HCT116 (cell line): ENCODE measurements at regions of chr5 and their contacts with region 1.

Region 1: GRCh38 chr5:50823568-50823967 is 157.1 kb downstream of the PARP8 start:
- DNase-seq: no peak
- ATAC-seq: no peak
- H3K4me3 ChIP-seq: no peak overlapping the region
- H3K27ac ChIP-seq: no peak overlapping the region
- H3K4me1 ChIP-seq: no peaks in the 10 kb centered on the region
- H3K27me3 ChIP-seq: no peaks in the 10 kb centered on the region
- CTCF ChIP-seq: no peak
- POLR2A ChIP-seq: no peak
- RAD21 ChIP-seq: no peak

Region 2: GRCh38 chr5:50836356-50836755 is 12.8 kb after region 1 on chr5:
- CTCF ChIA-PET with region 1: no interaction called
- POLR2A ChIA-PET with region 1: no interaction called
- RAD21 ChIA-PET with region 1: no interaction called
- intact Hi-C with region 1: no loop called
- DNase-seq: no peak
- ATAC-seq: no peak
- H3K4me3 ChIP-seq: no peak overlapping the region
- H3K27ac ChIP-seq: no peak overlapping the region
- H3K4me1 ChIP-seq: no peaks in the 10 kb centered on the region
- H3K27me3 ChIP-seq: no peaks in the 10 kb centered on the region
- CTCF ChIP-seq: no peak
- POLR2A ChIP-seq: no peak
- RAD21 ChIP-seq: no peak

Region 3: GRCh38 chr5:50867140-50867539 is 43.6 kb after region 1 on chr5:
- CTCF ChIA-PET with region 1: no interaction called
- POLR2A ChIA-PET with region 1: no interaction called
- RAD21 ChIA-PET with region 1: no interaction called
- intact Hi-C with region 1: loop called (anchors 1 kb)
- DNase-seq: no peak
- ATAC-seq: no peak
- H3K4me3 ChIP-seq: no peak overlapping the region
- H3K27ac ChIP-seq: no peak overlapping the region
- H3K4me1 ChIP-seq: no peaks in the 10 kb centered on the region
- H3K27me3 ChIP-seq: peaks cover 21% of the 10 kb centered on the region
- CTCF ChIP-seq: no peak
- POLR2A ChIP-seq: no peak
- RAD21 ChIP-seq: no peak